Calu3 (cell line): ENCODE measurements at regions of chr14 and their contacts with region 1.

Region 1: DNA sequence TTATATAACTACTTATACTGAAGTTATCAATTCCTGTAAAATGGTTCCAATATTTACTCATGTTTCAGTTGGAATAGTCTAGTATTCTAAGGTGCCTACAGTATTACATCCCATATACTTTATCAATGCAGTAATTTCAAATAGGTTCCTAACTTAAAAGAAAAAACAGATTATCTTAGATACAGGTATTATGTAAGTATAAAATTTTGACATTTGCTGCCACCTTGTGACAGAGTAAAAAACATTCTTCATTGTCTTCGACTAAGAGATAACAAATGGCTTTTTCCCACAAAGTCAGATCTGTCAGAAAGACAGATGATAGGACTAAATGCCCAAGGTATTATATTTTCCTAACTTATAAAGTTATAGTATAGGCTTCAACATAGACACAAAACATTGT is 78.7 kb downstream of the TXNDC16 start:
- DNase-seq: peak; percentile 4
- H3K4me3 Mint-ChIP-seq: no peak overlapping the region
- H3K27ac Mint-ChIP-seq: no peak overlapping the region
- H3K4me1 Mint-ChIP-seq: no peaks in the 10 kb centered on the region
- H3K27me3 Mint-ChIP-seq: no peaks in the 10 kb centered on the region
- CTCF ChIP-seq: no peak

Region 2: GRCh38 chr14:52227619-52228222 is 245.8 kb before region 1 on chr14:
- CTCF ChIA-PET with region 1: no interaction called
- intact Hi-C with region 1: no loop called
- DNase-seq: no peak
- H3K4me3 Mint-ChIP-seq: no peak overlapping the region
- H3K27ac Mint-ChIP-seq: no peak overlapping the region
- H3K4me1 Mint-ChIP-seq: no peaks in the 10 kb centered on the region
- H3K27me3 Mint-ChIP-seq: peaks cover 11% of the 10 kb centered on the region
- CTCF ChIP-seq: no peak

Region 3: GRCh38 chr14:52299692-52300278 is 173.8 kb before region 1 on chr14:
- CTCF ChIA-PET with region 1: no interaction called
- intact Hi-C with region 1: loop called (anchors 1 kb)
- DNase-seq: no peak
- H3K4me3 Mint-ChIP-seq: no peak overlapping the region
- H3K27ac Mint-ChIP-seq: no peak overlapping the region
- H3K4me1 Mint-ChIP-seq: no peaks in the 10 kb centered on the region
- H3K27me3 Mint-ChIP-seq: peaks cover 39% of the 10 kb centered on the region
- CTCF ChIP-seq: peak; percentile 15